ENCODE measurements at regions of chr17 and their contacts with region 1.

Region 1: GRCh38 chr17:63478791-63479494 is 2.1 kb downstream of the ACE start:
- DNase-seq: peak; percentile 80
- H3K4me3 ChIP-seq: no peak overlapping the region
- H3K27ac ChIP-seq: no peak overlapping the region
- H3K4me1 ChIP-seq: peaks cover 8% of the 10 kb centered on the region
- CTCF ChIP-seq: peak; percentile 86

Region 2: GRCh38 chr17:63337579-63337978 is 141.4 kb before region 1 on chr17:
- CTCF ChIA-PET with region 1: no interaction called
- POLR2A ChIA-PET with region 1: no interaction called
- intact Hi-C with region 1: no loop called
- DNase-seq: no peak
- H3K4me3 ChIP-seq: no peak overlapping the region
- H3K27ac ChIP-seq: no peak overlapping the region
- H3K4me1 ChIP-seq: no peaks in the 10 kb centered on the region
- CTCF ChIP-seq: no peak

Region 3: DNA sequence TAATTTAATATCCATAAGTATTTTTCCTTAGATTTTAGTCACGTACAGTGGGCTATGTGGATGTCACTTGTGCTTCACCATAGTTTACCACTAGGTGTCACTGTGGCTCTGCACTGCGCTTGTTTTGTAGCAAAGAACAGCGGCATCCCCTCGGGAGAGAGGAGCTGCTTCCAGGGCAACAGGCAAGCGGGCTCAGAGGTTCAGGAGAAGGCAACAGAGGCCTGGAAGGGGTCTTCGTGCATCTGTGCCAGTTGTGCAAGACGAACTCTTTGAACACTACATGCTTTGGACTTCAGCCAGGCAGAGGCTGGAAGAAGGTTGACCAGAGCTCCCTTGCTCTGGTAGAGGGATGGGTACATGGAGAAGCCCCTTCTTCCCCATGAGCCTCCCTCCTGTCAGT is 53.5 kb before region 1 on chr17:
- CTCF ChIA-PET with region 1: interaction called, 15 read pairs
- POLR2A ChIA-PET with region 1: no interaction called
- intact Hi-C with region 1: loop called (anchors 1 kb)
- DNase-seq: peak; percentile 81
- H3K4me3 ChIP-seq: no peak overlapping the region
- H3K27ac ChIP-seq: no peak overlapping the region
- H3K4me1 ChIP-seq: peaks cover 14% of the 10 kb centered on the region
- CTCF ChIP-seq: peak; percentile 98

Region 4: DNA sequence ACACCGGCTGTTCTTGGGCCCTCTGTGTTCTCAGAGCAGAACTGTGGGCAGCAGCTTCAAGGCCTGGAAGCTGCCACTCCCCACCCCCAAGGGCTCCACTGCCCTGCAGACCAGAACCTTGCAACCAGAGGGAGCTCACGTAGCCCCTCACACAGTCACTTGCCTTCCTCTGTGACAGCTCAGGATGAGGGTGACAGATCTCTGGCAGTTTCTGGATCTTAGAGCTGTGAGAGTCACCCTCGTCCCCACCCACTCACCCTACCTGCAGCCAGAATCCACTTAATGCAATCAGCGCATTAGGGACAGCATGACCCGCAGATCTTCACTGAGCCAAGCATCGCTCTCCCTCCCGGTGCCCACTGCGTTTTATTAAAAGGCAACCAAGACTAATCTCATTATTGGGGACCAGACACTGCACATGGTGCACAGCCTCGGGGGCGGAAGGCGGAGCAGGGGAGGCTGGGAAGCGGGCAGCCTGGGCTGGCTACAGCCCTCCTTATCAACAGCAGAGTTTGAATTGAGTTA is 36.4 kb before region 1 on chr17:
- CTCF ChIA-PET with region 1: no interaction called
- POLR2A ChIA-PET with region 1: no interaction called
- intact Hi-C with region 1: loop called (anchors 2 kb)
- DNase-seq: peak; percentile 45
- H3K4me3 ChIP-seq: no peak overlapping the region
- H3K27ac ChIP-seq: no peak overlapping the region
- H3K4me1 ChIP-seq: peaks cover 7% of the 10 kb centered on the region
- CTCF ChIP-seq: peak; percentile 46

Region 5: GRCh38 chr17:63611354-63611753 is 132.4 kb after region 1 on chr17:
- CTCF ChIA-PET with region 1: no interaction called
- POLR2A ChIA-PET with region 1: no interaction called
- intact Hi-C with region 1: loop called (anchors 1 kb)
- DNase-seq: no peak
- H3K4me3 ChIP-seq: no peak overlapping the region
- H3K27ac ChIP-seq: no peak overlapping the region
- H3K4me1 ChIP-seq: no peaks in the 10 kb centered on the region
- CTCF ChIP-seq: no peak